Activated T-helper 2 cell treated with anti-CD3 and anti-CD28 coated beads, Interferon-gamma antibody, Interleukin-2, Interleukin-4, amounts not matched to agents 10 μg/mL and 5 μg/mL and 100 μg/mL, durations not matched to agents 14 hours and 24 hours and 36 hours (primary cell): ENCODE measurements at regions of chr18 and their contacts with region 1.

Region 1: GRCh38 chr18:72544092-72544886 is at the start of gene CBLN2:
- DNase-seq: no peak
- H3K4me3 Mint-ChIP-seq: no peak within 1 kb of the TSS
- H3K27ac Mint-ChIP-seq: no peak within 1 kb of the TSS
- H3K4me1 Mint-ChIP-seq: peaks cover 5% of the 10 kb centered on the region
- H3K27me3 Mint-ChIP-seq: peaks cover 36% of the 10 kb centered on the region
- total RNA-seq, gene CBLN2: not detected in 2 replicates

Region 2: DNA sequence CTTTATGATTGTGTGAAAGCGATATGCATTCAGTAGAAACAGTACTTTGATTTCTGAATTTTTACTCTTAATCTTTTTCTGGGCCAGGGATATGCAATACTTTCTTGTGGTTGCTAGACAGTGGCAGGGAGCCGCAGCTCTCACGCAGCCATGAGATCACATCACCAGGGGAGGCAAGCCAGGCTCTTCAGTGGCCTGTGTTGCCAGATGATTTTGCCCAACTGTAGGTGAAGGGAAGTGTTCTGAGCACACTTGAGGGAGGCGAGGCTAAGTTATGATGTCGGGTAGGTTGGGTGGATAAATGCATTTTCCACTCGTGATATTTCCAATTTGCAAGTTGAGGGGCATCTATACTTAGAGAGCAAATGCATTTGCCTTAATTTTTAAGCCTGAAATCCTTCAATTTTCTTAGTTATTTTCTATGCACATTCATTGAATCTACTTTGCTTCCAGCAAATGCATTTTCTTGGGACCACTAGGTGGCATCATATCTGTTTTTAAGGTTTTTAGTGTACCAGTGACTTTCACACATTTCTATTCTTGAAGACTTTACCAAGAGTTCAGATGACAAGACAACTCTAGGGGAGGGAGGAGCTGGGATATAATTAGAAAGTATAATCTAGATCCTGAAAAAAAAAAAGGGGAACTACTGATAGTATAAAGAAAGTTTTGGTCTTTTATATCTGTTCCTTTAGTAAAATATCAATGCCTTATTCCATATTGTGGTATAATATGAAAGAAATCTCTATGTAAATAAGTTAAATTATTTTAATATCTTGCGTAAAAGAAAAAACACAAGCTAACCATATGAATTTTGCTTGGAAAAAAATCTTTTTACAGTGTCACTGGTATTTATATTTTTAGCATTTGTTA is 1612.1 kb before region 1 on chr18:
- intact Hi-C with region 1: loop called (anchors 5 kb)
- DNase-seq: no peak
- H3K4me3 Mint-ChIP-seq: no peak overlapping the region
- H3K27ac Mint-ChIP-seq: no peak overlapping the region
- H3K4me1 Mint-ChIP-seq: no peaks in the 10 kb centered on the region
- H3K27me3 Mint-ChIP-seq: no peaks in the 10 kb centered on the region

Region 3: DNA sequence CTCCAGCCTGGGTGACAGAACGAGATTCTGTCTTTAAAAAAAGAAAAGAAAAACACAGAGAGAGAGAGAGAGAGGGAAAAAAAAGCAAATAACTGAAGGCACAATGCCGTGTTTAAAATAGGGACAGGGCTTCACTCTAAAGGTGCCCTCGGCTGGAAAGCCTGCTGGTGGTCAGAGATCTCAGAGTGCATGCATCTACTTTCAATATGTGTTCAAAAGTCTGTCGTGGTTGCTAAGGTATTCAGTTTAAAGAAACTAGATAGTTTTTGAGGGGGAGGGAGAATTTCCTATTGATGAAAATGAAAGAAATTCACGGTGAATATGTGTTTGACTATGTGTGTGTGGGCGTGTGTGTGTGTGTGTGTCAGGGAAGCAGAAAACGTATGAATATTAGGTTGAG is 10.8 kb after region 1 on chr18:
- intact Hi-C with region 1: no loop called
- DNase-seq: no peak
- H3K4me3 Mint-ChIP-seq: no peak overlapping the region
- H3K27ac Mint-ChIP-seq: no peak overlapping the region
- H3K4me1 Mint-ChIP-seq: no peaks in the 10 kb centered on the region
- H3K27me3 Mint-ChIP-seq: no peaks in the 10 kb centered on the region

Region 4: DNA sequence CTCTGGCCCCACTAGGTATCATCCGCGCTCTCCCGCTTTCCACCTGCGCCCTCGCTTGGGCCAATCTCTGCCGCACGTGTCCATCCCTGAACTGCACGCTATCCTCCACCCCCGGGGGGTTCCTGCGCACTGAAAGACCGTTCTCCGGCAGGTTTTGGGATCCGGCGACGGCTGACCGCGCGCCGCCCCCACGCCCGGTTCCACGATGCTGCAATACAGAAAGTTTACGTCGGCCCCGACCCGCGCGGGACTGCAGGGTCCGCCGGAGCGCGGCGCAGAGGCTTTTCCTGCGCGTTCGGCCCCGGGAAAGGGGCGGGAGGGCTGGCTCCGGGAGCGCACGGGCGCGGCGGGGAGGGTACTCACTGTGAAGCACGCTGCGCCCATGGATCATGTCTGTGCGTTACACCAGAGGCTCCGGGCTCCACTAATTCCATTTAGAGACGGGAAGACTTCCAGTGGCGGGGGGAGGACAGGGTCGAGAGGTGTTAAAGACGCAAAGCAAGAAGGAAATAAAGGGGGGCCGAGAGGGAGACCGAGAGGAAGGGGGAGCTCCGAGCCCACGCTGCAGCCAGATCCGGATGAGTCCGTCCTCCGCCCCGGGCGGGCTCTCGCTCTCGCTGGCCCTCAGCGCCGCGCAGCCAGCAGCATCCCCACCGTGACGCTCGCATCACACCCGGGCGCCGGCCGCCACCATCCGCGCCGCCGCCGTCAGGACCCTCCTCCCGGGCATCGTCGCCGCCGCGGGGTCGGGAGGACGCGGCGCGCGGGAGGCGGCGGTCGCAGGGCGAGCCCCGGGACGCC is 322.8 kb after region 1 on chr18:
- intact Hi-C with region 1: loop called (anchors 5 kb)
- DNase-seq: no peak
- H3K4me3 Mint-ChIP-seq: no peak overlapping the region
- H3K27ac Mint-ChIP-seq: no peak overlapping the region
- H3K4me1 Mint-ChIP-seq: no peaks in the 10 kb centered on the region
- H3K27me3 Mint-ChIP-seq: peaks cover 35% of the 10 kb centered on the region